Adrenal gland (tissue), 19 donors: ENCODE measurements at regions of chrX and their contacts with region 1.

Region 1: GRCh38 chrX:47560831-47561652 is at the start of gene ARAF:
- DNase-seq: peak; percentile 97 to 100 (median 99)
- H3K4me3 ChIP-seq: peak within 1 kb of the TSS in 3 of 4 donors; percentile 52 to 63 (median 56)
- H3K27ac ChIP-seq: peak within 1 kb of the TSS; percentile 81 to 99 (median 95)
- H3K4me1 ChIP-seq: no peaks in the 10 kb centered on the region
- H3K27me3 ChIP-seq: no peaks in the 10 kb centered on the region
- CTCF ChIP-seq: no peak
- POLR2A ChIP-seq: peak; percentile 28 to 40
- total RNA-seq, gene ARAF: 31.2 to 113 (median 66.5) TPM

Region 2: GRCh38 chrX:47446431-47446830 is 114.6 kb before region 1 on chrX:
- intact Hi-C with region 1: no loop called
- DNase-seq: no peak
- H3K4me3 ChIP-seq: no peak overlapping the region
- H3K27ac ChIP-seq: no peak overlapping the region
- H3K4me1 ChIP-seq: no peaks in the 10 kb centered on the region
- H3K27me3 ChIP-seq: peaks cover 10% of the 10 kb centered on the region
- CTCF ChIP-seq: no peak
- POLR2A ChIP-seq: no peak

Region 3: GRCh38 chrX:47619486-47620302 is 58.7 kb after region 1 on chrX and contains the start of gene SYN1:
- intact Hi-C with region 1: no loop called
- DNase-seq: peak; percentile 79 to 89 (median 83)
- H3K4me3 ChIP-seq: peak within 1 kb of the TSS in 1 of 4 donors; percentile 44
- H3K27ac ChIP-seq: no peak within 1 kb of the TSS
- H3K4me1 ChIP-seq: no peaks in the 10 kb centered on the region
- H3K27me3 ChIP-seq: peaks cover 12% of the 10 kb centered on the region
- CTCF ChIP-seq: peak in 4 of 6 experiments; percentile 8 to 41 (median 22)
- POLR2A ChIP-seq: no peak
- total RNA-seq, gene SYN1: 0.12 to 8.2 (median 3.1) TPM in 8 of 9 donors, not detected in the other

Region 4: GRCh38 chrX:47644557-47645091 is 83.6 kb after region 1 on chrX:
- intact Hi-C with region 1: loop called in 1 of 2 experiments (anchors 10 kb)
- DNase-seq: no peak
- H3K4me3 ChIP-seq: no peak overlapping the region
- H3K27ac ChIP-seq: peak overlapping the region in 2 of 5 donors; percentile 21 to 79
- H3K4me1 ChIP-seq: peaks cover 0 to 16% of the 10 kb centered on the region in 2 donors
- H3K27me3 ChIP-seq: no peaks in the 10 kb centered on the region
- CTCF ChIP-seq: peak in 5 of 6 experiments; percentile 9 to 53 (median 38)
- POLR2A ChIP-seq: no peak

Region 5: GRCh38 chrX:47710252-47710651 is 149.2 kb after region 1 on chrX:
- intact Hi-C with region 1: no loop called
- DNase-seq: no peak
- H3K4me3 ChIP-seq: no peak overlapping the region
- H3K27ac ChIP-seq: no peak overlapping the region
- H3K4me1 ChIP-seq: no peaks in the 10 kb centered on the region
- H3K27me3 ChIP-seq: peaks cover 4% of the 10 kb centered on the region
- CTCF ChIP-seq: no peak
- POLR2A ChIP-seq: no peak